Transverse colon (tissue), 4 donors: ENCODE measurements at regions of chr4 and their contacts with region 1.

Region 1: DNA sequence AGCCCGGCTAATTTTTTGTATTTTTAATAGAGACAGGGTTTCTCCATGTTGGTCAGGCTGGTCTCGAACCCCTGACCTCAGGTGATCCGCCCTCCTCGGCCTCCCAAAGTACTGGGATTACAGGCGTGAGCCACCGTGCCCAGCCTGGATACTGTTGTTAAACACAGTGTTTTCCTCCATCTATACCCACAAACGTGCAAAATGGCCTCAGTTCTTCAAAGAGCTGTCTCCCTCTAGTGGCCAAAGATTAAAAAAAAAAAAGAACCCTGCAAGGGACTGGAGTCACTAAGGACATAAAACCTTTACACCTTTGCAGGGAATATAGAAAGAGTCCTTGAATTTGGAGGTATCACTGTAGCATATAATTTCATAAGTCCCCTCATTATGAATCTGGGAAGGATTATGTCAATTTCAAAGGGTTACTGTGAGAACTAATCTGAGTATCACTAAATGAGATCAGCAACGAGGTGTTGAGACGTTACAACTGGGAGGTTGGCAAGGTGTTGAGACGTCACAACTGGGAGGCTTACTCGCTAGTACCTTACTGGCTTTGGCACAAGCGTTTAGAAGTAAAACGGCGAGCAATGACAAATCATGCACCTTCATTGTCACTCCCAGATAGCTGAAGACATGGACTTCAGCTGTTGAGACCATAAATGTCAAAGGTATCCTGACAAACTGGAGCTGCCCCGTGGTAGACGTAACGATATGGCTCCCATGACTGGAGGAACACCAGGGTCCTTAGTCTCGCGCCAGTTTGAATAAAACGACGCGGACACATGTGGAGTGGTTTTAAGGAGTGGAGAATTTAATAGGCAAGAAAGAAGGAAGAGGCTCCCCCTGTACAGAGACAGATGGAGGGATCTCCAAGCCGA is 33.4 kb upstream of the ENPP6 start:
- DNase-seq: no peak
- H3K4me3 ChIP-seq: no peak overlapping the region
- H3K27ac ChIP-seq: no peak overlapping the region
- H3K4me1 ChIP-seq: no peaks in the 10 kb centered on the region
- H3K27me3 ChIP-seq: no peaks in the 10 kb centered on the region
- CTCF ChIP-seq: peak; percentile 38 to 64 (median 53)
- EP300 ChIP-seq: no peak
- POLR2A ChIP-seq: no peak

Region 2: GRCh38 chr4:185096032-185096653 is 845.1 kb after region 1 on chr4:
- in situ Hi-C with region 1: no loop called
- intact Hi-C with region 1: loop called (anchors 10 kb)
- DNase-seq: peak; percentile 25
- H3K4me3 ChIP-seq: no peak overlapping the region
- H3K27ac ChIP-seq: no peak overlapping the region
- H3K4me1 ChIP-seq: no peaks in the 10 kb centered on the region
- H3K27me3 ChIP-seq: no peaks in the 10 kb centered on the region
- CTCF ChIP-seq: peak; percentile 48 to 67 (median 54)
- EP300 ChIP-seq: no peak
- POLR2A ChIP-seq: no peak